Activated naive CD4-positive, alpha-beta T cell treated with anti-CD3 and anti-CD28 coated beads for 36 hours (primary cell): ENCODE measurements at regions of chr1 and their contacts with region 1.

Region 1: DNA sequence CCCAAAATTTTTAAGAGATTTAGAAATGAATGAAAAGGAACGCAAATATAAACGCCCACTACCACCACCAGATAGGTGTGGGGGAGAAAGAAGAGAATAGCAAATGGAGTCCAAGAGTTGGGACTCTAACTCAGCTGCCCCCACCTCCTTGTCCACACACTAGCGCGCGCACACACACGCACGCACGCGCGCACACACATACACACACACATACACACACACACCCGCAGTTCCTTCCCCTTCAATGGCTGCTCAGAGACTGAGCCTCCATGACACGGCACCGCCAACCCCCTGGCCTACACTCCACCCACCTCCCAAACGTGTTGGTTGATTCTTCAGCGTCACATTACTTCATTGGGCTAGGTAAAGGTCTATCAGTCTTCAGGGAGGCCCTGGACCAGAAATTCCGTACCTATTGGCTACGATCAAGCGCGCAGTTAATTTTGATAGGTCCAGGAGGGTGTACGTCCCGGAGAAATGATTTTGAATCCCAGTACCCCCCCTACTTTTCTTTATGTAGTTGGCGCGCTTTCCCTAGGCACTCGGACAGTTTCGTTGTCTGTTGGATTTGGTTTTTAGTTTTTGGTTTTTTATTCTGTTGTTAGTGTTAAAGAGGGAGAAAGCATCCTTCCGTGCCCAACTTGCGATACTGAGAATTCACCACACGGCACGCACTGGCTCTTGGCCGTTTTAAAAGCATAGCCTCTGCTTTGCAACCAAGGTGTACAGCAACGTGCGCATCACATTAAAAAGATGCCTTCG is at the start of gene ANP32E:
- DNase-seq: peak; percentile 97
- H3K4me3 Mint-ChIP-seq: no peak within 1 kb of the TSS
- H3K27ac Mint-ChIP-seq: no peak within 1 kb of the TSS
- H3K4me1 Mint-ChIP-seq: peaks cover 21% of the 10 kb centered on the region
- H3K27me3 Mint-ChIP-seq: no peaks in the 10 kb centered on the region
- total RNA-seq, gene ANP32E: 201 to 202 TPM

Region 2: DNA sequence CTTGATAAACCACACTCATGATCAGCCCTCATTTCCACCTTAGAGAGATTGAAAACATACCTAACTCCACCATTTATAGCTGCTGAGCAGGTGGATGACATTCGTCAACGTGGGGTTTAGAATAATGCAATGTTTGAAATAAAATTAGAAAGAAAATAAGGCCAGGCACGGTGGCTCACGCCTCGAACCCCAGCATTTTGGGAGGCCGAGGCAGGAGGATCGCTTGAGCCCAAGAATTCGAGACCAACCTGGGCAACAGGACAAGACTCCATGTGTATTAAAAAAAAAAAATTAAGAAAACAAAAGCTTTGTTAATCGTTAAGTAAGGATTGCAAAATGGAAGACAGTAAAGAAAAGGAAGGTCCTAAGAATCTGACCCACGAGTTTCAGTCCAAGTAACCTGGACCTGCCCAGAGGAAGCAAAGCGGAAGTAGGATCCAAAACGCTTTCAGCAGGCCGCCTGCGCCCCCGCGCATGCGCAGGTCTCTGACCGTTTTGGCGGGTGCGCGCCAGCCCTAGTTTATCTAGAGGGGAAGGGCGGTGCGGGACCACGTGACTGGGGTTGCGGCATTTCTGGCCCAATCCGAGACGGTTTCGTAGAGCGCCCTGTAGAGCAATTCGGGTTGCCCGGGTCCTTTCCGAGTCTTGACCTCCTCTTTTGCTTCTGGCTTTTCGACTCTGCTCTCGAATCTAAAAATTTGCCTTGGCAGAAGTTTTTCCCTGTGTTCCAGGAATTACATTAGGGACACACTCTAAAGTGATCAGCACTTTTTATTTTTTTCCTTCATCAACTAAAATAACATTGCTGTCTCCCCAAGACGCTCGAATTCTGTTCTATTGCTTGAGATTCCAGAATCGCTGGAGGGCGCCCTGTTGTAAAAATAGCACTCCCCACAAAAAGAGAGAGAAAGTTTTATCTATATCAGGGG is 22.6 kb before region 1 on chr1:
- CTCF ChIA-PET with region 1: interaction called, 5 read pairs
- intact Hi-C with region 1: loop called (anchors 1 kb)
- DNase-seq: peak; percentile 96
- H3K4me3 Mint-ChIP-seq: peak overlapping the region; percentile 81
- H3K27ac Mint-ChIP-seq: peak overlapping the region; percentile 92
- H3K4me1 Mint-ChIP-seq: peaks cover 15% of the 10 kb centered on the region
- H3K27me3 Mint-ChIP-seq: no peaks in the 10 kb centered on the region

Region 3: DNA sequence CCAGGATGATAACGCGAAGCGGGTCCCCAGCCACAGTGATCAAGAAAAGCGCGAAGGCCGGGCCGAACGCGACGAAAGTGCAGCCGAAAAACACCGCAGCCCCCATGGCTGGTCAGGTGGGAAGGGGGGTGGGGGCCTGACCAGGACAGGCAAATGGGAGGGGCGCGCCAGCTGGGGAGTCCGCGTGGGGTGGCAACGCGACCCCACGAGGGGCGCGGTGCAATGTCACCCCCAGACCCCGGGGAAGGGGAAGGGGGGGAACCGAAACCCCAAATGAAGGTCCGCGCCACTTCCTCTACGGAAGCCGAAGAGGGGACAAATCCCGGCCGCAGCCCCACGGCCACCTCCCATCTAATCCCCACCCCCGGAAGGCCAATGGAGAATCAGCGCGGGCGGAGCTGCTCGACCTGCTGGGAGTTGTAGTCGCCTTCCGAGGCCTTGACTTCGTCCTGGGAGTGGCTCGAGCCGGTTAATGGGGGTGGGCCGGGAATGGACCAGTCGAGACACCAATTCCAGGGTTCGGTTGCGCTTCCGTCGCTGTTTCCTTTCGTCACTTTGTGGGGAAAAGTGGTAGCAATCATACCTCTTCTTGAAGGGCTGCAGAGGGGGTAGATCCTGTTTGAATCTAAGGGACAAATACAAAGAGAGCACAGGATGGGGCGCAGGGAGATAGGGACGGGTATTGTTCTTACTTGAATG is 32.8 kb after region 1 on chr1 and contains the start of gene APH1A:
- CTCF ChIA-PET with region 1: no interaction called
- intact Hi-C with region 1: loop called (anchors 1 kb)
- DNase-seq: peak; percentile 98
- H3K4me3 Mint-ChIP-seq: peak within 1 kb of the TSS; percentile 89
- H3K27ac Mint-ChIP-seq: peak within 1 kb of the TSS; percentile 96
- H3K4me1 Mint-ChIP-seq: peaks cover 23% of the 10 kb centered on the region
- H3K27me3 Mint-ChIP-seq: no peaks in the 10 kb centered on the region
- total RNA-seq, gene APH1A: 71.2 to 75.7 TPM

Region 4: GRCh38 chr1:150281837-150282653 is 46.0 kb after region 1 on chr1 and contains the start of gene CIART:
- CTCF ChIA-PET with region 1: no interaction called
- intact Hi-C with region 1: loop called (anchors 1 kb)
- DNase-seq: peak; percentile 78
- H3K4me3 Mint-ChIP-seq: peak within 1 kb of the TSS; percentile 82
- H3K27ac Mint-ChIP-seq: no peak within 1 kb of the TSS
- H3K4me1 Mint-ChIP-seq: peaks cover 24% of the 10 kb centered on the region
- H3K27me3 Mint-ChIP-seq: no peaks in the 10 kb centered on the region
- total RNA-seq, gene CIART: 0.84 to 1.0 TPM

Region 5: GRCh38 chr1:150321826-150322166 is 85.8 kb after region 1 on chr1:
- CTCF ChIA-PET with region 1: no interaction called
- intact Hi-C with region 1: loop called (anchors 1 kb)
- DNase-seq: no peak
- H3K4me3 Mint-ChIP-seq: peak overlapping the region; percentile 99
- H3K27ac Mint-ChIP-seq: peak overlapping the region; percentile 99
- H3K4me1 Mint-ChIP-seq: peaks cover 36% of the 10 kb centered on the region
- H3K27me3 Mint-ChIP-seq: no peaks in the 10 kb centered on the region

Region 6: GRCh38 chr1:150515328-150516048 is 279.5 kb after region 1 on chr1 and contains the start of gene FALEC:
- CTCF ChIA-PET with region 1: no interaction called
- intact Hi-C with region 1: loop called (anchors 2 kb)
- DNase-seq: peak; percentile 91
- H3K4me3 Mint-ChIP-seq: peak within 1 kb of the TSS; percentile 90
- H3K27ac Mint-ChIP-seq: peak within 1 kb of the TSS; percentile 20
- H3K4me1 Mint-ChIP-seq: peaks cover 9% of the 10 kb centered on the region
- H3K27me3 Mint-ChIP-seq: no peaks in the 10 kb centered on the region
- total RNA-seq, gene FALEC: not detected